Activated naive CD4-positive, alpha-beta T cell treated with anti-CD3 and anti-CD28 coated beads for 36 hours (primary cell): ENCODE measurements at regions of chr14 and their contacts with region 1.

Region 1: GRCh38 chr14:73633116-73634010 is 11.4 kb upstream of the DNAL1 start:
- DNase-seq: peak; percentile 74
- H3K4me3 Mint-ChIP-seq: peak overlapping the region; percentile 65
- H3K27ac Mint-ChIP-seq: no peak overlapping the region
- H3K4me1 Mint-ChIP-seq: peaks cover 5% of the 10 kb centered on the region
- H3K27me3 Mint-ChIP-seq: peaks cover 6% of the 10 kb centered on the region

Region 2: GRCh38 chr14:73173092-73173735 is 460.1 kb before region 1 on chr14:
- CTCF ChIA-PET with region 1: interaction called, 3 read pairs
- intact Hi-C with region 1: loop called (anchors 10 kb)
- DNase-seq: no peak
- H3K4me3 Mint-ChIP-seq: no peak overlapping the region
- H3K27ac Mint-ChIP-seq: no peak overlapping the region
- H3K4me1 Mint-ChIP-seq: peaks cover 2% of the 10 kb centered on the region
- H3K27me3 Mint-ChIP-seq: no peaks in the 10 kb centered on the region

Region 3: DNA sequence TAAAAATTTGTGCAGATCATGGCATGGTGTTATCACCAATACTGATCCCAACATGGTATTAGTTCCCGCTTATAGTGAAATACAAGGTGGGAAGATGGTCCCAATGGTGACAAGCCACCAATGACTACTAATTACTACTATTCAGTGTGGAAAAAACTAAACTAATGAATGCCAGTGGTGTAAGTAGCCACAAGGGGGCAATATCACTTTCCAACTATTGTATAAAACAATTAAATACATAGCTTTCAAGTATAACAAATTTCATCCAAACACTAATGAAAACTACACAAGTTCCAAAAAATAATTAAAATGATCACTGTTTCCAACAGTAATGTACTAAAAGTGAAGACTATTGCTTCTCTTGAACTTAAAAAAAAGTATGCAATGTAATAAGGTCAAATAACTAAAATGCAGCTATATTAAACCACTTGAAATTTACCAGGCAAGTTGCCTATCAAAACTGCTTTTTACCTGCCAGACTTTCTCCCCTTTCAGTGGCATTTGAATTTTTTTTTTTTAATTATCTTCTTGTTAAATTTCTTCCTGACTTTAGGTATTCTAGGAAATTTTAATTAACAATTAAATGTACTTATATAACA is 338.1 kb before region 1 on chr14:
- CTCF ChIA-PET with region 1: interaction called, 5 read pairs
- intact Hi-C with region 1: loop called (anchors 1 kb)
- DNase-seq: no peak
- H3K4me3 Mint-ChIP-seq: no peak overlapping the region
- H3K27ac Mint-ChIP-seq: no peak overlapping the region
- H3K4me1 Mint-ChIP-seq: peaks cover 12% of the 10 kb centered on the region
- H3K27me3 Mint-ChIP-seq: no peaks in the 10 kb centered on the region

Region 4: DNA sequence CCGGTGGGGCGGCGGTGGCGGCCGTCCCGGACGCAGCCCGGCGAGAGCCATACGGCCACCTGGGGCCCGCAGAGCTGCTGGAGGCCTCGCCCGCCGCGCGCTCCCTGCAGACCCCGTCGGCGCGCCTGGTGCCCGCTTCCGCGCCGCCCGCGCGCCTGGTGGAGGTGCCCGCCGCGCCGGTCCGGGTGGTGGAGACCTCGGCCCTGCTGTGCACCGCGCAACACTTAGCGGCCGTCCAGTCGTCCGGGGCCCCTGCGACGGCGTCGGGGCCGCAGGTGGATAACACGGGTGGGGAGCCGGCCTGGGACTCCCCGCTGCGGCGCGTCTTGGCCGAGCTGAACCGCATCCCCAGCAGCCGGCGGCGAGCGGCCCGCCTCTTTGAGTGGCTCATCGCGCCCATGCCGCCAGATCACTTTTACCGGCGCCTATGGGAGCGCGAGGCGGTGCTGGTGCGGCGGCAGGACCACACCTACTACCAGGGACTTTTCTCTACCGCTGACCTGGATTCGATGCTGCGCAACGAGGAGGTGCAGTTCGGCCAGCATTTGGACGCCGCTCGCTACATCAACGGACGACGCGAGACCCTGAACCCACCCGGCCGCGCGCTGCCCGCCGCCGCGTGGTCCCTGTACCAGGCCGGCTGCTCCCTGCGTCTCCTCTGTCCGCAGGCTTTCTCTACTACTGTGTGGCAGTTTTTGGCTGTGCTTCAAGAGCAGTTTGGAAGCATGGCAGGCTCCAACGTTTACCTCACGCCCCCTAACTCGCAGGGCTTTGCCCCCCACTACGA is 141.9 kb before region 1 on chr14:
- CTCF ChIA-PET with region 1: interaction called, 3 read pairs
- intact Hi-C with region 1: loop called (anchors 5 kb)
- DNase-seq: peak; percentile 74
- H3K4me3 Mint-ChIP-seq: peak overlapping the region; percentile 78
- H3K27ac Mint-ChIP-seq: no peak overlapping the region
- H3K4me1 Mint-ChIP-seq: peaks cover 42% of the 10 kb centered on the region
- H3K27me3 Mint-ChIP-seq: no peaks in the 10 kb centered on the region

Region 5: GRCh38 chr14:73613046-73613383 is 20.3 kb before region 1 on chr14:
- CTCF ChIA-PET with region 1: interaction called, 13 read pairs
- intact Hi-C with region 1: no loop called
- DNase-seq: no peak
- H3K4me3 Mint-ChIP-seq: peak overlapping the region; percentile 79
- H3K27ac Mint-ChIP-seq: no peak overlapping the region
- H3K4me1 Mint-ChIP-seq: peaks cover 3% of the 10 kb centered on the region
- H3K27me3 Mint-ChIP-seq: no peaks in the 10 kb centered on the region

Region 6: DNA sequence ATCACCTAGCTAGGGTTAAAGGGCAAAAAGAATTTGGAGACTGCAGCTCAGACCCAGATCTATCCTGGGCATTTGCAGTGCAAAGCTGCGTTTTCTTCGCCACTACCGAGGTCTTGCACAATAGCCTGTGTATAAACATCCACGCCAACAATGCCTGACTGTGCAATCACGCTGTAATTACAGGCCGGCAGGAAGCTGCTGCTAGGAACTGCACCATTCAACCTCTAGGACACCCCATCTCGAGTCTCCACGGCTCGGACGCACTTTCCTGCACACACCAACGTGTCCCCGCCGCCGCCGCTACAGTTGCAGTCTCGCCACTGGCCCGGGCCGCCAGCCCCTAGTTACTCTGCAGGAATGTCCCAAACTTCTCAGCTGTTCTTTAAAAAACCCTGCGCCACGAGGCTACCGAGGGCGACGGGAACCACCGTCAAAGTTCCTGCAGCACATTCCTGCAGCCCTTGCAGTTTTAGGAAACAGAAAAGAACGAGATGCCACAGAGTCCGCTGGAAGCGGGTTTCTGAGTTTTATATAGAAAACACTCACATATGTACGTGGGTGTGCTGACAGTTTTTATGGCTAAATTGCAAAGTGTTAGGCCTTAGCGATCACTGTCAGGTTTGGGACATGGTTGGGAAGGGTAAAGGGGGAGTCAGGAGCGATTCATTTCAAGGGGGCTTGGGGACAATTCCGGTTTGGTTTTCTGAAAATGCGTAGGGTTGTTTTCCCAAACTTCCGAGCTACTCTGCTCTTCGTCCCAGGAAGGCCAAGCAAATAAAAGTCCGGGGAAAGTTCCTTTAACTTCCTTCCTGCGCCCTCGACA is 152.7 kb after region 1 on chr14:
- CTCF ChIA-PET with region 1: no interaction called
- intact Hi-C with region 1: no loop called
- DNase-seq: peak; percentile 75
- H3K4me3 Mint-ChIP-seq: peak overlapping the region; percentile 90
- H3K27ac Mint-ChIP-seq: peak overlapping the region; percentile 91
- H3K4me1 Mint-ChIP-seq: peaks cover 56% of the 10 kb centered on the region
- H3K27me3 Mint-ChIP-seq: no peaks in the 10 kb centered on the region

Region 7: GRCh38 chr14:73913256-73913655 is 279.9 kb after region 1 on chr14:
- CTCF ChIA-PET with region 1: no interaction called
- intact Hi-C with region 1: no loop called
- DNase-seq: no peak
- H3K4me3 Mint-ChIP-seq: no peak overlapping the region
- H3K27ac Mint-ChIP-seq: no peak overlapping the region
- H3K4me1 Mint-ChIP-seq: peaks cover 2% of the 10 kb centered on the region
- H3K27me3 Mint-ChIP-seq: no peaks in the 10 kb centered on the region

Region 8: DNA sequence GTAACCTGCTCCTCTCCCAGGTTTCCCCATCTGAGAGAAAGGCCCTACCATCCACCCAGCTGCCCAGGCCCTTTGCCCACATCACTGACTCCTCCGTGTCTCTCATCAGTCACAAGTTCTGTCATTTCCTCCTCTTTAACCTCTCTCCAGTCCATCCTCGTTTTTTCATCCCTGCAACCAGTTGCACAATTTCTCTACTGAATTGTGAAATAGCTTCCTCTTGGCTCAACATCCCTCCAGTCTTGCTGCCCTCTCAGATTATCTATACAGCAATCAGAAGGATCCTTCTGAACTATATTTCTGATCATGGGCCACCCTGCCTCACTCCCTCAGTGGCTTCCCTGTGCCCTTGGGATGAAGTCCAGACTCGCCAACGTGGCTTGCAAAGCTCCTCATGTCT is 309.7 kb after region 1 on chr14:
- CTCF ChIA-PET with region 1: no interaction called
- intact Hi-C with region 1: no loop called
- DNase-seq: no peak
- H3K4me3 Mint-ChIP-seq: no peak overlapping the region
- H3K27ac Mint-ChIP-seq: no peak overlapping the region
- H3K4me1 Mint-ChIP-seq: no peaks in the 10 kb centered on the region
- H3K27me3 Mint-ChIP-seq: no peaks in the 10 kb centered on the region

Region 9: GRCh38 chr14:74493343-74494261 is 860.2 kb after region 1 on chr14 and contains the start of gene ISCA2:
- CTCF ChIA-PET with region 1: no interaction called
- intact Hi-C with region 1: no loop called
- DNase-seq: peak; percentile 100
- H3K4me3 Mint-ChIP-seq: no peak within 1 kb of the TSS
- H3K27ac Mint-ChIP-seq: peak within 1 kb of the TSS; percentile 86
- H3K4me1 Mint-ChIP-seq: peaks cover 25% of the 10 kb centered on the region
- H3K27me3 Mint-ChIP-seq: no peaks in the 10 kb centered on the region
- total RNA-seq, gene ISCA2: 27.7 to 30.9 TPM